ENCODE measurements at regions of chr17 and their contacts with region 1.

Region 1: GRCh38 chr17:18896146-18896545 is 38.2 kb downstream of the PRPSAP2 start:
- DNase-seq: no peak
- H3K4me3 Mint-ChIP-seq: no peak overlapping the region
- H3K27ac Mint-ChIP-seq: no peak overlapping the region
- H3K4me1 Mint-ChIP-seq: peaks cover 13% of the 10 kb centered on the region
- H3K27me3 Mint-ChIP-seq: no peaks in the 10 kb centered on the region

Region 2: GRCh38 chr17:18855831-18856569 is 40.1 kb before region 1 on chr17:
- CTCF ChIA-PET with region 1: no interaction called
- intact Hi-C with region 1: loop called (anchors 1 kb)
- DNase-seq: peak; percentile 95
- H3K4me3 Mint-ChIP-seq: peak overlapping the region; percentile 86
- H3K27ac Mint-ChIP-seq: peak overlapping the region; percentile 73
- H3K4me1 Mint-ChIP-seq: peaks cover 38% of the 10 kb centered on the region
- H3K27me3 Mint-ChIP-seq: no peaks in the 10 kb centered on the region

Region 3: GRCh38 chr17:18921912-18922451 is 25.8 kb after region 1 on chr17:
- CTCF ChIA-PET with region 1: no interaction called
- intact Hi-C with region 1: loop called (anchors 1 kb)
- DNase-seq: peak; percentile 36
- H3K4me3 Mint-ChIP-seq: no peak overlapping the region
- H3K27ac Mint-ChIP-seq: peak overlapping the region; percentile 27
- H3K4me1 Mint-ChIP-seq: peaks cover 70% of the 10 kb centered on the region
- H3K27me3 Mint-ChIP-seq: no peaks in the 10 kb centered on the region